Breast epithelium (tissue), 4 donors: ENCODE measurements at regions of chr15 and their contacts with region 1.

Region 1: DNA sequence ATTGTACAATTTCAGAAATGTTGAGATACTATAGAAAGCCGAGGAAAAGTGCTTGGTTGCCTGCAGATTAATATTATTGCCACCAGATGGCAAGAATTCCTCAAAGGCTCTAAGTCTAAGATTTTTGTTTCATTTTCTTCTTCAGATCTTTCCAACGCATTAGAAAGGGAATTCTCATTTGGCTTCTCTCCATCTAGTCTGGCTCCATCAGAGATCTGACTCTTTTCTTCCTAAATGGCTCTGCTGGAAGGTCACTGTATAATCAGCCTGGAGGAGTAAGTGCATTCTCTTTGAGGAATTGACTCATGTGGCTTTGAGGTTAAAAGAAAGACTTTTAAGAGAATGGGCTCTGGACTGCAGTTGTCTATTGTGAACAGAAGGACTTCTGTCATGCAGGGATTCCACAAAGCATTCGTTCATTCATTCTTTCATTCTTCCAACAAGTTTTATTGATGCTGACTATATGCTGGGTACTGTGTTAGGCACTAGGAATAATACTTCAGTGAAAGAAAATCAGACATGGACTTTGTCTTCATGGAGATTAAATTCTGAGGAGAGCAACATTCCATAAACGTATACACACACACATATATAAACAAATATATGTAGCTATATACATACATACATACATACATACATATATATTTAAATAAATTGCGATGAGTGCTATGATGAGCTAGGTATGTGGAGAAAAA is 55.3 kb downstream of the SLC28A2 start:
- DNase-seq: no peak
- H3K4me3 ChIP-seq: peak overlapping the region in 2 of 3 donors; percentile 22 to 49
- H3K27ac ChIP-seq: no peak overlapping the region
- H3K4me1 ChIP-seq: no peaks in the 10 kb centered on the region
- H3K27me3 ChIP-seq: no peaks in the 10 kb centered on the region
- CTCF ChIP-seq: peak in 2 of 3 donors; percentile 53 to 64
- POLR2A ChIP-seq: no peak

Region 2: DNA sequence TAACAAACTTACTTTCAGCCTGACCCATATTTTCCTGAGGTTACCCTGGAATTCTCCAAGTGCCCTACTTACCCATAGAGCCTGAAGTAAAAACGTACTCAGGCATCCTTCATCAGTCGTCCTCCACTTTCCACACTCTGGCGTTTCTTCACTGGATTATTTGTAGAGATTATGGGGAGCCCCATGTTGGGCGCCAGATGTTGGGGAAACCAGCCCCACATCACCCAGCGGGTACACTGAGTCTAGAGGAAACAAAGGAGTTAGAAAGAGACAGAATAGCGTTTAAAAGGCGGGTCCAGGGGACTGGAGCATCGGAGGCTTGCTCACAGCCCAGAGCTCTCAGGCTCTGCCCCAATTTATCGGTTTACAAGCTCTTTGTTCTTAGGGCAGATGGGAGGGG is 65.1 kb before region 1 on chr15:
- intact Hi-C with region 1: loop called (anchors 2 kb)
- DNase-seq: no peak
- H3K4me3 ChIP-seq: no peak overlapping the region
- H3K27ac ChIP-seq: no peak overlapping the region
- H3K4me1 ChIP-seq: no peaks in the 10 kb centered on the region
- H3K27me3 ChIP-seq: no peaks in the 10 kb centered on the region
- CTCF ChIP-seq: no peak
- POLR2A ChIP-seq: no peak

Region 3: DNA sequence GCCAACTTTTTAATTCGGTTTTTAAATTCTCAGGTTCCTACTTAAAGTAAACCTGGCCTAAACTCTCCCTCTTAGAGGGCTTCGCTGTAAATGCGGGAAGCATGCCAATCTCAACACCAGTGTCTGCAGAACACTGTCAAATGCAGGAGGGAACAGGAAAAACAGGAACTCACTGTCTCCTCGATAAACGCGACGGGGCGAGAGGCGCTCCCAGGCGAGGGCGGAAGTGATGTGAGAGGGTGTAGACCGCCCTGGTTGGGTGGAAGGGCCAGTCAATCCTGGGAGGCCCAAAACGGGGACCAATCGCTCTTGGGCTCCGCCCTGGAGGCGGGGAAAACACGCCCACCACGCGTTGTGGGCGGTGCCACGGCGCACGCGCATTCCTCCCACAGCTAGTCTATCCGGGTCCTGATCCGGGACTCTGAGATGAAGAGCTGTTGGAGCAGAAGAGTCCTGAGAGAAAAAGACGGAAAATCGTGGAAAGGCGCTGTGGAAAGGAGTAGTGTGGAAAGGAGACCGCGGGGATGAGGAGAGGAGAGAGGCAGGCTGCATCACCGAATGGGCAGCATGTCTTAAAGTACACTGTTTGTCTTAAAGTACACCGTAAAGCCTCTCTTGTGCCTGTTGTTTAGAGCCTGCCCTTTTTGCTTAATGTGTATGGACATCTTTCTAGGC is 28.2 kb before region 1 on chr15:
- intact Hi-C with region 1: no loop called
- DNase-seq: peak; percentile 99
- H3K4me3 ChIP-seq: peak overlapping the region; percentile 55 to 88 (median 68)
- H3K27ac ChIP-seq: peak overlapping the region; percentile 88 to 95
- H3K4me1 ChIP-seq: peaks cover 0 to 5% of the 10 kb centered on the region in 2 donors
- H3K27me3 ChIP-seq: no peaks in the 10 kb centered on the region
- CTCF ChIP-seq: no peak
- POLR2A ChIP-seq: peak; percentile 75